GM12878 (cell line): ENCODE measurements at regions of chr9 and their contacts with region 1.

Region 1: DNA sequence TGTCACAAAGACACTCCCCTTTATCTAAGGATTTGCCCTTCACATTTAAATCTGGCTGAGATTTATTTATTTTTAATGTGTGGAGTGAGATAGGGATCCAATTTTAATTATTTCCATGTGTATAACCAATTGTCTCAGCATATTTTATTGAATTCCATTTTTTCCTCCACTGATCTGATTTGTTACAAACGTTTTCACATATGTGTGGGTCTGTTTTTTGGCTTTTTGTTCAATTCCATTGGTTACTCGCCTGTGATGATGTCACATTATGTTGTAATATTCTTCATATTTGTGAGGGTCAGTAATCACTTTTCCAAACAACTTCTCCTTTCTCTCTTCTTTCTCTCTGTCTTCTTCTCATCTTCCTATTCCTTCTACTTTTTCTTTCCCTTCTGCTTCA is 278.3 kb upstream of the RFX3 start:
- DNase-seq: no peak
- ATAC-seq: no peak
- H3K4me3 ChIP-seq: no peak overlapping the region
- H3K27ac ChIP-seq: no peak overlapping the region
- H3K4me1 ChIP-seq: no peaks in the 10 kb centered on the region
- H3K27me3 ChIP-seq: no peaks in the 10 kb centered on the region
- CTCF ChIP-seq: no peak
- EP300 ChIP-seq: no peak
- POLR2A ChIP-seq: no peak
- RAD21 ChIP-seq: no peak

Region 2: DNA sequence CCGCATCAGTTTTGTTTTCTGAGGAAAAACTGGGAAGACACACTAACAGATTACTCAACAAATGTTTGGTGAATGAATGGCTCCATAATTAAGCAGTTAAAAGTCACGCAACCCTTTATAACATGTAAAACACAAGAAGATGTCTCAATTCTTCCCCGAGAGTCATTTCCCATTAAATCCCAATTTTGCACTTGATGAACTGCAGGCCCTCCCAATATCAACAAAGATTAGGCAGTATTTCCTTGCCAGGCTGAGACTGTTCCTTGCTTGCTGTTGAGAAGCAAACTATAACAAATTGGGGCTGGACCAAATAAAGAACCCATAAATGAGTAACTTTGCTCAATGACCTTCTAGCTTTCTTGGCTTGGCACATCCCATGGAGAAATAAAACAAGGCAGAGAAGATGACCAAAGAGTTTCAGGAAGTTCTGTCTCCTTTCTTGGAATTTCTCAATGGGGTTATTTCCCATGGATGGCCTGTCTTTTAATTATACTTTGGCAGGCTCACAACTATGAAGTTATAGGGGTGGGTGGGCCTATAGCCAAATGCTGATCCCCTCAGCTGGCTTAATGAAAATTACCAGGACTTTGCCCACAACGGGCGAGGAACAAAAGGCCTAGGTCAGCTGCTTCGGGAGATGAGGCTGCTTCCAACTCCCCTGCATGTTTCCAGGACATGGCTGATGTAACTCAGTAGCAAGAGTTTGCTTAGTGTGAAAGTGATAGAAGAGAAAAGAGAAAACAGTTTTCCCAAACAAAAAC is 35.2 kb before region 1 on chr9:
- CTCF ChIA-PET with region 1: no interaction called
- POLR2A ChIA-PET with region 1: no interaction called
- RAD21 ChIA-PET with region 1: no interaction called
- SMC1A ChIA-PET with region 1: no interaction called
- in situ Hi-C with region 1: no loop called
- intact Hi-C with region 1: loop called (anchors 1 kb)
- DNase-seq: no peak
- ATAC-seq: no peak
- H3K4me3 ChIP-seq: no peak overlapping the region
- H3K27ac ChIP-seq: no peak overlapping the region
- H3K4me1 ChIP-seq: no peaks in the 10 kb centered on the region
- H3K27me3 ChIP-seq: no peaks in the 10 kb centered on the region; a peak in 1 of 4 replicates
- CTCF ChIP-seq: no peak
- EP300 ChIP-seq: no peak
- POLR2A ChIP-seq: no peak
- RAD21 ChIP-seq: no peak